K562 (cell line): ENCODE measurements at regions of chr11 and their contacts with region 1.

Region 1: GRCh38 chr11:94020777-94021481 is at the start of gene HEPHL1:
- DNase-seq: no peak
- ATAC-seq: no peak
- H3K4me3 ChIP-seq: no peak within 1 kb of the TSS
- H3K27ac ChIP-seq: no peak within 1 kb of the TSS
- H3K4me1 ChIP-seq: peaks cover 0 to 5% of the 10 kb centered on the region in 2 experiments; a peak in 3 of 5 replicates
- H3K27me3 ChIP-seq: no peaks in the 10 kb centered on the region
- CTCF ChIP-seq: no peak
- EP300 ChIP-seq: no peak
- POLR2A ChIP-seq: no peak
- RAD21 ChIP-seq: no peak
- polyA plus RNA-seq, gene HEPHL1: not detected

Region 2: GRCh38 chr11:93567401-93567895 is 453.5 kb before region 1 on chr11:
- CTCF ChIA-PET with region 1: no interaction called
- POLR2A ChIA-PET with region 1: no interaction called
- in situ Hi-C with region 1: no loop called
- intact Hi-C with region 1: no loop called
- DNase-seq: no peak
- ATAC-seq: no peak
- H3K4me3 ChIP-seq: no peak overlapping the region
- H3K27ac ChIP-seq: no peak overlapping the region
- H3K4me1 ChIP-seq: no peaks in the 10 kb centered on the region
- H3K27me3 ChIP-seq: peaks cover 4 to 10% of the 10 kb centered on the region in 2 experiments; a peak in 3 of 5 replicates
- CTCF ChIP-seq: no peak
- EP300 ChIP-seq: no peak
- POLR2A ChIP-seq: no peak
- RAD21 ChIP-seq: no peak

Region 3: DNA sequence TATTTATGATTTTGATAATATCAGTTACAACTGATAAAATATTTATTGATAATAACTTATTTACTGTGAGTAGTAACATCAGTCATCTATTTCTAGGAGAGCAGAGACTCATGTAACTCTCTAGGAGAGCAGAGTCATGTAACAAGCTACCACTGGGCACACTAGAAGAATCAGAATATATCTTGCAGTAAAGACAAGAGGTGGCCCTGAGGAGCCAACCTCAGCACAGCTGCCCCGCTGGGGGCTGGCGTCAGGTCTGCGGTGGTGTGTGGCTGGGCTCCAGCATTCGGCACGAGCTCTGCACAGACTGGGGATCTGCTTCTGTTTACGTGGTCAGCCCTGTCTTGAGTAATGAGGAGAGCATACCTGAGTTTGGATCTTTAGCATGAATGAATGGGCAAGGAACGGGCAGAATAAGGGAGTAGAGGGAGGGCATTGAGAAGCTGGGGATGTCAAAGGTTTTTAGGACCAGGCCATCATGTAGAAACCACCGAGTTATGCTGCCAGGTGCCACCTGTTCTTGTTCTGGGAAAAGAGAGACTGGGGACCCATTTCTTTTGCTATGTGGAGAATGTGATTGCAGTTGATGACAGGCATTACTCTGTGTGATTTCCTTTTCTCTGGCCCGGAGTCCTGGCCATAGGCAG is 50.9 kb before region 1 on chr11:
- CTCF ChIA-PET with region 1: no interaction called
- POLR2A ChIA-PET with region 1: no interaction called
- in situ Hi-C with region 1: no loop called
- intact Hi-C with region 1: loop called (anchors 5 kb)
- DNase-seq: no peak
- ATAC-seq: peak; percentile 44; the same call in 2 of the 3 replicates
- H3K4me3 ChIP-seq: no peak overlapping the region
- H3K27ac ChIP-seq: no peak overlapping the region
- H3K4me1 ChIP-seq: peaks cover 7 to 16% of the 10 kb centered on the region in 2 experiments; a peak in 4 of 5 replicates
- H3K27me3 ChIP-seq: no peaks in the 10 kb centered on the region
- CTCF ChIP-seq: no peak; a peak in 1 of 6 replicates
- EP300 ChIP-seq: no peak
- POLR2A ChIP-seq: no peak
- RAD21 ChIP-seq: no peak

Region 4: GRCh38 chr11:94151903-94152677 is 131.2 kb after region 1 on chr11:
- CTCF ChIA-PET with region 1: no interaction called
- POLR2A ChIA-PET with region 1: no interaction called
- in situ Hi-C with region 1: no loop called
- intact Hi-C with region 1: no loop called
- DNase-seq: peak; percentile 66 to 79 (median 70)
- ATAC-seq: peak; percentile 96
- H3K4me3 ChIP-seq: no peak overlapping the region
- H3K27ac ChIP-seq: peak overlapping the region; percentile 45; the same call in 1 of the 3 replicates
- H3K4me1 ChIP-seq: peaks cover 14 to 38% of the 10 kb centered on the region in 2 experiments
- H3K27me3 ChIP-seq: no peaks in the 10 kb centered on the region
- CTCF ChIP-seq: no peak
- EP300 ChIP-seq: no peak; the same call in 1 of the 2 replicates
- POLR2A ChIP-seq: no peak
- RAD21 ChIP-seq: no peak